CD8-positive, alpha-beta T cell (primary cell): ENCODE measurements at regions of chr3 and their contacts with region 1.

Region 1: GRCh38 chr3:51995346-51996163 is at the start of gene RPL29:
- DNase-seq: peak; percentile 85 to 97 (median 91)
- ATAC-seq: peak; percentile 98
- H3K4me3 ChIP-seq: peak within 1 kb of the TSS; percentile 82 to 93
- H3K4me3 Mint-ChIP-seq: peak within 1 kb of the TSS; percentile 100
- H3K27ac ChIP-seq: peak within 1 kb of the TSS; percentile 86 to 92
- H3K27ac Mint-ChIP-seq: peak within 1 kb of the TSS; percentile 100
- H3K4me1 ChIP-seq: peaks cover 14% of the 10 kb centered on the region
- H3K4me1 Mint-ChIP-seq: peaks cover 35% of the 10 kb centered on the region
- H3K27me3 ChIP-seq: no peaks in the 10 kb centered on the region
- H3K27me3 Mint-ChIP-seq: no peaks in the 10 kb centered on the region
- CTCF ChIP-seq: no peak
- total RNA-seq, gene RPL29: 1,694 to 1,736 TPM

Region 2: DNA sequence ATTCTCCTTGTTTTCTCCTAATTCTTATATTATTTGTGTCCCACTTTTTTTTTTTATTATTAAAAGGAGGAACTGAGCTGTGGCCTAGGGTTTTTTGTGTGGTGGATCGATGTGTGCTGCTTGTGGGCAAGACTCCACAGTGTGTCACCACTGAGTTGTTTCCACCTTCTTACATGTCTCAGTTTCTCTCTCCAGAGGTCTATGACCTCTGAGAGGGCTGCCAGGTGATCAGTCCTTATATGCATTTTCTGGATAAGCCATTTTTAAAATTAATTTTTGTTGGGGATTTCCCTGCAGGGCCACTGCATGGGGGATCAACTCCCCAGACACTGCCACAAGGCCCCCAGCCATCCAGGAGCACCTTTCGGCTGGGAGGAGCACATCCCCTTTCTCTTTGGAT is 244.3 kb before region 1 on chr3:
- CTCF ChIA-PET with region 1: no interaction called
- POLR2A ChIA-PET with region 1: no interaction called
- intact Hi-C with region 1: no loop called
- DNase-seq: no peak
- ATAC-seq: no peak
- H3K4me3 ChIP-seq: no peak overlapping the region
- H3K4me3 Mint-ChIP-seq: no peak overlapping the region
- H3K27ac ChIP-seq: no peak overlapping the region
- H3K27ac Mint-ChIP-seq: no peak overlapping the region
- H3K4me1 ChIP-seq: no peaks in the 10 kb centered on the region
- H3K4me1 Mint-ChIP-seq: peaks cover 7% of the 10 kb centered on the region
- H3K27me3 ChIP-seq: no peaks in the 10 kb centered on the region
- H3K27me3 Mint-ChIP-seq: no peaks in the 10 kb centered on the region
- CTCF ChIP-seq: no peak

Region 3: GRCh38 chr3:51974963-51975851 is 20.3 kb before region 1 on chr3 and contains the start of gene ABHD14A:
- CTCF ChIA-PET with region 1: interaction called, 10 read pairs
- POLR2A ChIA-PET with region 1: interaction called, 12 read pairs
- intact Hi-C with region 1: loop called (anchors 1 kb)
- DNase-seq: peak; percentile 35 to 89 (median 69)
- ATAC-seq: peak; percentile 66
- H3K4me3 ChIP-seq: peak within 1 kb of the TSS; percentile 86 to 92
- H3K4me3 Mint-ChIP-seq: peak within 1 kb of the TSS; percentile 88
- H3K27ac ChIP-seq: peak within 1 kb of the TSS; percentile 50 to 72
- H3K27ac Mint-ChIP-seq: peak within 1 kb of the TSS; percentile 87
- H3K4me1 ChIP-seq: peaks cover 33% of the 10 kb centered on the region
- H3K4me1 Mint-ChIP-seq: peaks cover 31% of the 10 kb centered on the region
- H3K27me3 ChIP-seq: no peaks in the 10 kb centered on the region
- H3K27me3 Mint-ChIP-seq: no peaks in the 10 kb centered on the region
- CTCF ChIP-seq: no peak
- total RNA-seq, gene ABHD14A: 6.8 to 6.9 TPM

Region 4: DNA sequence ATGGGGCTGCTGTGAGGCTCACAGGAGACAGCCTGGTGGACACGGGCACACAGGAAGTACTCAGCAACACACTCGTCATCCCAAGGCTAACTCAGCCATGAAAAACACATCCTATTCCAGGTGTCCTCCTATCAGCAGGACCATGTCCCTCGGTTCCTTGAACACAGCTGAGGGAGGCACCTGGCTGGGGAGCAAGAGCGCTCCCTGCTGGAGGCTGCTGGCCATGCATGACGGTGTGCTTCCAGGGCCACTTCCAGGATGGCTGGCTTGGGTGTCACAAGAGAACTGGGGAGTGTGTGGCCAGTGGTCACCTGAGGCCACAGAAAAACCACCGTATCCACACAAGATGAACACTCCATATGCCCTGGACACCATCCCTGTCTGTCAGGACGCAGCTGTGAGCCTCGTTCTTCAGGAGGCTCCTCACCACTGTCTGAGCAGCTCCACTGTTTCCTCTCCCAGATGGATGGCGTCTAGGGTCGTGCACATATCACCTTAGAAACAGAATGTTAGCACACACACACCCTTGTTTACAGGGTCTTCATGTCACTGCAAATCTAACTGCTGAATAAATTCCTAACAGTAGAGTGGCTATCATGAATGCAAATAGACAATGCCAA is 127.7 kb after region 1 on chr3:
- CTCF ChIA-PET with region 1: interaction called, 164 read pairs
- POLR2A ChIA-PET with region 1: no interaction called
- intact Hi-C with region 1: no loop called
- DNase-seq: peak; percentile 47 to 85 (median 74)
- ATAC-seq: peak; percentile 97
- H3K4me3 ChIP-seq: no peak overlapping the region
- H3K4me3 Mint-ChIP-seq: no peak overlapping the region
- H3K27ac ChIP-seq: no peak overlapping the region
- H3K27ac Mint-ChIP-seq: no peak overlapping the region
- H3K4me1 ChIP-seq: no peaks in the 10 kb centered on the region
- H3K4me1 Mint-ChIP-seq: no peaks in the 10 kb centered on the region
- H3K27me3 ChIP-seq: no peaks in the 10 kb centered on the region
- H3K27me3 Mint-ChIP-seq: no peaks in the 10 kb centered on the region
- CTCF ChIP-seq: peak; percentile 92

Region 5: GRCh38 chr3:52154117-52155094 is 158.9 kb after region 1 on chr3 and contains the start of gene POC1A:
- CTCF ChIA-PET with region 1: interaction called, 186 read pairs
- POLR2A ChIA-PET with region 1: interaction called, 9 read pairs
- intact Hi-C with region 1: loop called in 1 of 2 experiments (anchors 2 kb)
- DNase-seq: peak; percentile 61 to 91 (median 83)
- ATAC-seq: peak; percentile 85
- H3K4me3 ChIP-seq: peak within 1 kb of the TSS; percentile 98 to 99
- H3K4me3 Mint-ChIP-seq: peak within 1 kb of the TSS; percentile 96
- H3K27ac ChIP-seq: peak within 1 kb of the TSS; percentile 71 to 91
- H3K27ac Mint-ChIP-seq: peak within 1 kb of the TSS; percentile 96
- H3K4me1 ChIP-seq: peaks cover 7% of the 10 kb centered on the region
- H3K4me1 Mint-ChIP-seq: peaks cover 10% of the 10 kb centered on the region
- H3K27me3 ChIP-seq: no peaks in the 10 kb centered on the region
- H3K27me3 Mint-ChIP-seq: no peaks in the 10 kb centered on the region
- CTCF ChIP-seq: no peak
- total RNA-seq, gene POC1A: 0.24 to 0.42 TPM

Region 6: GRCh38 chr3:52406231-52406661 is 410.7 kb after region 1 on chr3:
- CTCF ChIA-PET with region 1: no interaction called
- POLR2A ChIA-PET with region 1: no interaction called
- intact Hi-C with region 1: loop called in 1 of 2 experiments (anchors 2 kb)
- DNase-seq: peak in 2 of 9 experiments; percentile 32 to 33
- ATAC-seq: no peak
- H3K4me3 ChIP-seq: no peak overlapping the region
- H3K4me3 Mint-ChIP-seq: no peak overlapping the region
- H3K27ac ChIP-seq: no peak overlapping the region
- H3K27ac Mint-ChIP-seq: no peak overlapping the region
- H3K4me1 ChIP-seq: peaks cover 31% of the 10 kb centered on the region
- H3K4me1 Mint-ChIP-seq: peaks cover 28% of the 10 kb centered on the region
- H3K27me3 ChIP-seq: no peaks in the 10 kb centered on the region
- H3K27me3 Mint-ChIP-seq: no peaks in the 10 kb centered on the region
- CTCF ChIP-seq: no peak